Activated CD4-positive, alpha-beta memory T cell treated with anti-CD3 and anti-CD28 coated beads for 36 hours (primary cell): ENCODE measurements at regions of chr15 and their contacts with region 1.

Region 1: DNA sequence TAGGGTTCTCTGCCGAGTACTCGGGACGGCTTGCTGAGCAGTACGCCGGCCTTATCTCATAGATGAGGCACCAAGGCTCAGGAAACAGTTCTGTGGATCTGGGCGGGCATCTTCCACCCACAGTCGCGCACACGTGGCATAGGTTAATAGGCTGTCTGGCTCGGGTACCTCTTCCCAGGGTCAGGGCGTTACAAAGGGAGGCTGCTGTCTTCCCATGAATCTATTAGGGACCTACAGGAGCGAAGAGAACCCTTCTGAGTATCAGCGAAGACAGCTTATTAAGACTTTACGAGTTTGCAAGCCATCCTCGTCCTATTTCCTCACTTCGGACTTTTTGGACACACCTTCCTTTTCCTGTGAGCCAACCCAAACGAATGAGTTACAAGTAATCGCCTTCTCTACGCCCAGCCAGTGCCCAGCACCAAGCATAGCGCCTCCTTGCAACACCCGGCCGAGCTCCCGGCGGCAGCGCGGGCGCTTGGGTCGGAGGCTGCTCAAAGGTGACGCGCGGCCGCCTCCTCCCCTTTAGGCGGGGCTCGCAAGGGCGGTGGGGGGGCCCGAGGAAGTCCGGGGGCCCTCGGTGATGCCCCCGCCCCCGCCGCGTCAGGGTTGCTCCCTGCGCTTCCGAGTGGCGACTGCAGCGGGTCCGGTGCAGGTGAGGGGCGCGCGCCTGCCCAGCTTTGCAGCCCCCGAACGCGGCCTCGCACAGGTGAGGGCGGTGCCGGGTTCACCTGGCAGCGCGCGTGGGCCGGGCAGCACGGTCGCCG is at the start of gene MCTP2:
- DNase-seq: peak; percentile 89
- H3K4me3 Mint-ChIP-seq: peak within 1 kb of the TSS; percentile 87
- H3K27ac Mint-ChIP-seq: peak within 1 kb of the TSS; percentile 91
- H3K4me1 Mint-ChIP-seq: peaks cover 64% of the 10 kb centered on the region
- H3K27me3 Mint-ChIP-seq: peaks cover 2% of the 10 kb centered on the region
- total RNA-seq, gene MCTP2: 38.5 to 41.7 TPM

Region 2: DNA sequence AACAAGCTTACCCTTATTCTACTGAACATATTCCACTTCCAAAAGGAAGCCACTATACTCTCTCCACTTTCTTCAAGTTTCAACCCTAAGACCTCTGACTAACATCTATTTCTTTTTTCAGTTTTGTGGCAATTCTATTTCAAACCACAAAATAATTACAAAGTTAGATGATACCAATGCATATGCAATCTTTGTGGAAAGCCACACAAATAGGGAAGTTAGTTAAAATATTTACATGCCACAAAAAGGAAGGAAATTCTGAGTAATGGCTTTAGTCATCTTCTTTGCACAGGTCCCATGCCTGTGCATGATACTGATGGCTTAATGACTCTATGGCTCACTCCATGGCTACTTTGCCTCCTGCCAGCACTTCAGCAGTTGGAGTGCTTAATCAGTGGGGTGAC is 56.7 kb before region 1 on chr15:
- CTCF ChIA-PET with region 1: interaction called, 6 read pairs
- POLR2A ChIA-PET with region 1: no interaction called
- intact Hi-C with region 1: loop called (anchors 1 kb)
- DNase-seq: peak; percentile 38
- H3K4me3 Mint-ChIP-seq: no peak overlapping the region
- H3K27ac Mint-ChIP-seq: no peak overlapping the region
- H3K4me1 Mint-ChIP-seq: peaks cover 10% of the 10 kb centered on the region
- H3K27me3 Mint-ChIP-seq: peaks cover 9% of the 10 kb centered on the region

Region 3: GRCh38 chr15:94263341-94264273 is 32.5 kb after region 1 on chr15:
- CTCF ChIA-PET with region 1: no interaction called
- POLR2A ChIA-PET with region 1: interaction called, 3 read pairs
- intact Hi-C with region 1: loop called (anchors 1 kb)
- DNase-seq: no peak
- H3K4me3 Mint-ChIP-seq: no peak overlapping the region
- H3K27ac Mint-ChIP-seq: no peak overlapping the region
- H3K4me1 Mint-ChIP-seq: peaks cover 30% of the 10 kb centered on the region
- H3K27me3 Mint-ChIP-seq: no peaks in the 10 kb centered on the region

Region 4: GRCh38 chr15:94287794-94288246 is 56.7 kb after region 1 on chr15:
- CTCF ChIA-PET with region 1: no interaction called
- POLR2A ChIA-PET with region 1: interaction called, 4 read pairs
- intact Hi-C with region 1: loop called (anchors 5 kb)
- DNase-seq: peak; percentile 63
- H3K4me3 Mint-ChIP-seq: no peak overlapping the region
- H3K27ac Mint-ChIP-seq: peak overlapping the region; percentile 64
- H3K4me1 Mint-ChIP-seq: peaks cover 39% of the 10 kb centered on the region
- H3K27me3 Mint-ChIP-seq: no peaks in the 10 kb centered on the region

Region 5: DNA sequence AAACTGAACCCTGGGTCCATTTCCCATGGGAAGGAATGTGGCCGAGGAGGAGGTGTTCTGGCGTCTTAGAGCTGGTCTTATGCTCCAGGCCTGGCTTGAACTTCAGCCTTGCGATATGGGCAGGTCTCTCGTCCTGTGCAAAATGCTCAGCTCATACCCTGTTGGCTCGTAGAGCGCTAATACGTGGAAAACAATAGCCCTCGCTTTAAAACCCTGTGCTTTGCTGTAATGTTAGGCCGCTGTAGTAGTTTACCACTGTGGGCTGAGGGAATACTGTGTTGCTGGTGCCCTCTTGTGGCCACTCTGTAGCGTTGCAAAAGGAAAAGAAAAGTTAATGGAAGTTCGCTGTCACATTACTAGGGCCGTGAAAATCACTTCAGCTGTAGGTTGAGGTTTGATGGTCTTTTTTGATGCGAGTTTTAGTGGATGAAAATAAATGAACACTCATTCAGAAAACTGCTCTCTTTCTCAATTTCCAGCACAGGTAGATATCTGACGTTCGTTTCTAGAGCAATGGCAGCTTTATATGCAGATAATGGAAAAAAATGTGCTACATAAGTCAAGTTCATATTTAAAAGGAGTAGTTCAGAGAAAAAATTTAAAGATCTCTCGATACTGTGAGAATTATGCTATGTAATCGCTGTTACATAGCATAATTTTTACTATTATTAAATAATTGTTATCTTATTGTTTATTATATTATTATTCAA is 93.1 kb after region 1 on chr15:
- CTCF ChIA-PET with region 1: interaction called, 56 read pairs
- POLR2A ChIA-PET with region 1: interaction called, 3 read pairs
- intact Hi-C with region 1: loop called (anchors 1 kb)
- DNase-seq: peak; percentile 73
- H3K4me3 Mint-ChIP-seq: no peak overlapping the region
- H3K27ac Mint-ChIP-seq: no peak overlapping the region
- H3K4me1 Mint-ChIP-seq: peaks cover 12% of the 10 kb centered on the region
- H3K27me3 Mint-ChIP-seq: no peaks in the 10 kb centered on the region